GM18951 (cell line): ENCODE measurements at regions of chr5 and their contacts with region 1.

Region 1: DNA sequence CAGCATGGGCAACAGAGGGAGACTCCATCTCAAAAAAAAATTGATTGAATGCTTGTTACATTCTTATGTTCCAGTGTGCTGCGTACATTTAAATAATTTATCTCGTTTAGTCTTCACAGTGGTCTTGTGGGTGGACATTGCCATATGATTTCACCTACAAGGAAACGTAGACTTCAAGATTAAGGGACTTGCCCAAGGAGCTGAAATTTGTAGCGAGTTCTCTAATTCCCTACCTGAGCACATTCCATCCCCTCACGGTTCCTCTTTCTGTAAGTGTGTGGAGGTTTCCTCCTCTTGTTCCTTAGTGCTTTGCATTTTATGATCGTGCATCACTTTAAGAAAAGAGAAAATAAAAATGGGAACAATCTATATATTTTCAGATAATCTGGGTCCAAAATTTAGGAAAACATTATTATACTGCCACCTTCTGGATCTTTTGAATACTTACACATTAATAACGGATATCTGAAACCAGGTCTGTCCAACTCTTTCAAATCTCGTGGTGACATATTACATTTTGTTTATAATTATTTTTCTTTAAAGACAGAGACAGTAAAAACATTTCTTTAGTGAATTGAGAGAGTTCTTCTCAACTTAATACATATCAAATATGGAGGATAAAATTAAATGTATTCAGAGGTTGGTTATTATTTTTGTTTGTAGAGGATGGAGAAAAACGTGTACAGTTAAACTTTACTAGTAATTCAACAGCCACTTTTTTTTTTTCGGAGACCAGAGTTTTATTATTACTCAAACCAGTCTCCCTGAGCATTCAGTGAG is 29.9 kb upstream of the C7 start:
- POLR2A ChIP-seq: no peak

Region 2: GRCh38 chr5:40386289-40386688 is 493.1 kb before region 1 on chr5:
- in situ Hi-C with region 1: no loop called
- POLR2A ChIP-seq: no peak

Region 3: GRCh38 chr5:40570408-40571129 is 308.8 kb before region 1 on chr5:
- in situ Hi-C with region 1: no loop called
- POLR2A ChIP-seq: no peak

Region 4: GRCh38 chr5:40755407-40756365 is 123.7 kb before region 1 on chr5 and contains the start of gene TTC33:
- in situ Hi-C with region 1: loop called (anchors 10 kb)
- POLR2A ChIP-seq: peak; percentile 12